ENCODE measurements at regions of chr11 and their contacts with region 1.

Region 1: GRCh38 chr11:124551189-124551588 is 7.7 kb upstream of the OR8B12 start:
- DNase-seq: no peak
- H3K4me3 ChIP-seq: no peak overlapping the region
- H3K27ac ChIP-seq: no peak overlapping the region
- H3K4me1 ChIP-seq: no peaks in the 10 kb centered on the region
- H3K27me3 ChIP-seq: no peaks in the 10 kb centered on the region
- CTCF ChIP-seq: no peak
- POLR2A ChIP-seq: no peak

Region 2: DNA sequence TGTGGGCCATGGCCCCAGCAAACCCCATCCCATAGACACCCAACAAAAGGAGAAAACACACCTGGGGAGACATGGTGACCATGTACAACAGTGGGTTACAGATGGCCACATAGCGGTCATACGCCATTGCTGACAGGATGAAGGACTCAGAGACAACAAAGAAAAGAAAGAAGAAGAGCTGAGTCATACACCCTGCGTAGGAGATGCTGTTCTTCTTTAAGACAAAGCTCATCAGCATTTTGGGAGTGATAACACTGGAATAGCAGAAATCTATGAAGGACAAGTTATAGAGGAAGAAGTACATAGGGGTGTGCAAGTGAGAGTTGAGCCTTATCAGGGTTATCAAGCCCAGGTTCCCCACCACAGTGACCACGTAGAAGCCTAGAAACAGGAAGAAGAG is 110.6 kb before region 1 on chr11:
- CTCF ChIA-PET with region 1: no interaction called
- POLR2A ChIA-PET with region 1: no interaction called
- dilution Hi-C with region 1: no loop called
- intact Hi-C with region 1: no loop called
- DNase-seq: no peak
- H3K4me3 ChIP-seq: no peak overlapping the region
- H3K27ac ChIP-seq: no peak overlapping the region
- H3K4me1 ChIP-seq: no peaks in the 10 kb centered on the region
- H3K27me3 ChIP-seq: no peaks in the 10 kb centered on the region
- CTCF ChIP-seq: no peak
- POLR2A ChIP-seq: no peak

Region 3: DNA sequence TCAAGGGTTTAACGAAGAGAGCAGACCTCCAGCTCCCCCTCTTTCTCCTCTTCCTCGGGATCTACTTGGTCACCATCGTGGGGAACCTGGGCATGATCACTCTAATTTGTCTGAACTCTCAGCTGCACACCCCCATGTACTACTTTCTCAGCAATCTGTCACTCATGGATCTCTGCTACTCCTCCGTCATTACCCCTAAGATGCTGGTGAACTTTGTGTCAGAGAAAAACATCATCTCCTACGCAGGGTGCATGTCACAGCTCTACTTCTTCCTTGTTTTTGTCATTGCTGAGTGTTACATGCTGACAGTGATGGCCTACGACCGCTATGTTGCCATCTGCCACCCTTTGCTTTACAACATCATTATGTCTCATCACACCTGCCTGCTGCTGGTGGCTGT is 19.0 kb after region 1 on chr11:
- CTCF ChIA-PET with region 1: interaction called, 3 read pairs
- POLR2A ChIA-PET with region 1: no interaction called
- dilution Hi-C with region 1: no loop called
- intact Hi-C with region 1: loop called (anchors 1 kb)
- DNase-seq: no peak
- H3K4me3 ChIP-seq: no peak overlapping the region
- H3K27ac ChIP-seq: no peak overlapping the region
- H3K4me1 ChIP-seq: no peaks in the 10 kb centered on the region
- H3K27me3 ChIP-seq: peaks cover 0 to 3% of the 10 kb centered on the region in 2 experiments
- CTCF ChIP-seq: no peak
- POLR2A ChIP-seq: no peak

Measured in endothelial cell of umbilical vein (primary cell).